ENCODE measurements at regions of chr19 and their contacts with region 1.

Region 1: GRCh38 chr19:9796113-9796773 is 22.6 kb downstream of the FBXL12 start:
- DNase-seq: peak; percentile 65 to 94 (median 78)
- H3K4me3 ChIP-seq: peak overlapping the region in 1 of 59 donors; percentile 15
- H3K27ac ChIP-seq: peak overlapping the region in 5 of 59 donors; percentile 16 to 47 (median 33)
- H3K27me3 ChIP-seq: no peaks in the 10 kb centered on the region
- CTCF ChIP-seq: peak; percentile 59 to 94 (median 84)

Region 2: GRCh38 chr19:9205501-9206113 is 590.6 kb before region 1 on chr19:
- intact Hi-C with region 1: loop called (anchors 2 to 5 kb)
- DNase-seq: peak; percentile 47 to 79 (median 64)
- H3K4me3 ChIP-seq: peak overlapping the region in 55 of 59 donors; percentile 24 to 67 (median 46)
- H3K27ac ChIP-seq: no peak overlapping the region
- H3K27me3 ChIP-seq: peaks cover 0 to 6% (median 0%) of the 10 kb centered on the region in 45 donors
- CTCF ChIP-seq: peak; percentile 49 to 90 (median 79)

Region 3: GRCh38 chr19:9584073-9584833 is 212.0 kb before region 1 on chr19 and contains the start of gene ZNF121:
- intact Hi-C with region 1: loop called in 1 of 2 experiments (anchors 5 kb)
- DNase-seq: peak; percentile 76 to 94 (median 86)
- H3K4me3 ChIP-seq: peak within 1 kb of the TSS; percentile 58 to 99 (median 88)
- H3K27ac ChIP-seq: peak within 1 kb of the TSS; percentile 51 to 98 (median 93)
- H3K27me3 ChIP-seq: peaks cover 0 to 10% (median 0%) of the 10 kb centered on the region in 45 donors
- CTCF ChIP-seq: peak in 30 of 56 donors; percentile 11 to 56 (median 27)
- total RNA-seq, gene ZNF121: 16.5 to 34.9 (median 23.7) TPM

Region 4: DNA sequence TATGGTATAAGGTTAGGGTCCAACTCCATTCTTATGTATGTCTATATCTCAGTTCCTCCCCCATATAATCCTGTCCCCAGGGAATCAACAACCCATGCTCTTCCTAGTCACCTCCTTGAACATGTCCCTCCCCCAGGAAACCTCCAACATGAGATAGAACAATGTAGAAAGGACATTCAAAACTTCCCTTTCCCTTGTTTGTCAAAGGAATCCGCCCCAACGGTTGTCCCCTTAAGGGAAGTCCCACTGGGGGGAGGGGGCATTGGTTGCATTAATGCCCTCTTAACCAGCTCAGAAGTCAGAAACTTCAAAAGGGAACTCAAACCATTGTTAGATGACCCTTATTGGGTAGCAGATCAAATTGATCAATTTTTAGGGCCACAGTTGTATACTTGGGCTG is 168.4 kb before region 1 on chr19:
- intact Hi-C with region 1: loop called (anchors 2 kb)
- DNase-seq: no peak
- H3K4me3 ChIP-seq: no peak overlapping the region
- H3K27ac ChIP-seq: no peak overlapping the region
- H3K27me3 ChIP-seq: no peaks in the 10 kb centered on the region
- CTCF ChIP-seq: no peak

Region 5: GRCh38 chr19:9768175-9769112 is 27.8 kb before region 1 on chr19 and contains the start of gene ZNF846:
- intact Hi-C with region 1: loop called in 1 of 2 experiments (anchors 2 kb)
- DNase-seq: peak; percentile 85 to 95 (median 92)
- H3K4me3 ChIP-seq: peak within 1 kb of the TSS; percentile 63 to 97 (median 87)
- H3K27ac ChIP-seq: peak within 1 kb of the TSS; percentile 66 to 98 (median 93)
- H3K27me3 ChIP-seq: no peaks in the 10 kb centered on the region
- CTCF ChIP-seq: peak in 27 of 56 donors; percentile 3 to 51 (median 18)
- total RNA-seq, gene ZNF846: 22.4 to 55.4 (median 33.7) TPM

Measured in dorsolateral prefrontal cortex (tissue), 120 donors.